RWPE1 (cell line): ENCODE measurements at regions of chr4 and their contacts with region 1.

Region 1: DNA sequence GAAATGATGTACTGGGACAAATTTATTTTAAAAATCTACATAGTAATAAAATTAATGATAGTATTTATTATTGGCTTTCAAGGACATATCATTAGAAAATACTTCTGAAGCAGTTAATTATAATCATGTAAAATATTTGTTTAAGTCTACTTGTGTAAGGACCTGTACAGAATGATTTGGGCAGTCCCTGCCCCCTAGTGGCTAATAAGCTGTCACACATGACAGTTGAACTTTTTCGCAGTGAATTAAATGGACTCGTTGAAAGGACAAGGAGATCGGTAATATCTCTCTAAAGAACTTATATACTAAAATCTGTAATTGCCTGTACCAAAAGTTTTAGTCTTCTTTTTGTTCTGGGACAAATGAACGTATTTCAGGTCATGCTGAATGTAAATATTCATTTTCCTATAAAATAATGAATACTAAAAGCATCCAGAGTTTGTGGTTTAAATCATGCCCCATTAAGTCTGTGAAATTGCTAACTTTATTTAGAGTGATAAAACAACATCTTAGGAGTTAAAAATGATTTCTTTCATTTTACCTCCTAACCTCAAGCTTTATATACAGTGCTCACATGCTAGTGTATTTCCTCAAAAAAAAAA is 13.6 kb downstream of the EXOC1 start:
- DNase-seq: peak; percentile 29
- H3K27ac ChIP-seq: no peak overlapping the region
- CTCF ChIP-seq: peak; percentile 83

Region 2: DNA sequence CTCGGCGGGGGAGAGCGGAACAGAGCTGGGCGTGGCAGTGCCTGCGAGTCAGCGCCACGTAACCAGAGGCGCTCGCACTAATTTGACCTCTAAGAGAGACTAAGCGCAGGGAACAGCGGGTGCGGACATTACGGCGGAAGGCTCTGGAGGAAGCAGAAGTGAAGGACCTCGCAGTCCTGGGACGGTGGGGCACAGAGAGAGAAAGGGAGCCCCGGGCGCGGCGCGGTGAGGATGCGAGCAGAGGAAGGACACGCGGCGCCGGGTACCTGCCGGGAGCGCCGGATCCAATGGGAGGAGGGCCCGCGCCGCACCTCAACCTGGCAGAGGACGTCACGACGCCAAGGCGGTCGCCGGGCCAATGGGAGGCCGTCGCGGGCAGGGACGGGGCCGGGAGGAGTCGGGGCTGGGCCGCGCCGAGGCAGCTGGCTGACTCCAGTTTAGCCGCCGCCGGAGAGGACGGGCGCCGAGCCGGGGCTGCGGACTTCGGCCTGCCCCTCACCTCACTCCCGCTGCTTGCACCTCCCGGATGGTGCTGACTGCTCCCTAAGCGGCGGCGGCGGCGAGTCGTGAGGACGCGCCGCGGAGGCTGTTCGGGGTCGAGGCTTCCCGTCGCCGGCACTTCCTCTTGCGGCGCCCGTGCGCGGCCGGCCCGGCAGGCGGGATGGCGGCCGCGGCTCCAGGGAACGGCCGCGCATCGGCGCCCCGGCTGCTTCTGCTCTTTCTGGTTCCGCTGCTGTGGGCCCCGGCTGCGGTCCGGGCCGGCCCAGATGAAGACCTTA is 471.4 kb before region 1 on chr4 and contains the start of gene TMEM165:
- CTCF ChIA-PET with region 1: no interaction called
- POLR2A ChIA-PET with region 1: no interaction called
- DNase-seq: peak; percentile 91
- H3K27ac ChIP-seq: peak within 1 kb of the TSS; percentile 92
- CTCF ChIP-seq: no peak

Region 3: DNA sequence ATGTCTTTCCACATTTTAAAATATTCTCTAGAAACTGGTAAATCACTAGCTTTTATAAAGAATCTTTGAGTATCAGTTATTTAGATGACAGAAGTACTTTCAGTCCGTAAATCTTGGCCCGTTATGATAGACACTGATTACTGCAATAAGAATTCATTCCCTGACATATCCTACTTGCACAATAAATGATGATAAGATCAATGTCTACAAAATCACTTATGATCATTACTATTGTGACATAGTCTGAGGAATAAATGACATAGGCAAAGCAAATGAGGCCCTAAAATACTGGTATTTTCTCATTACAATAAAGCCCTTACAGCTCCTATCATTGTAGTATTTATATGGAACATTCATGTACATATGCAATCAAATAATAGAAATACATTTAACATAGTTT is 268.4 kb before region 1 on chr4:
- CTCF ChIA-PET with region 1: no interaction called
- POLR2A ChIA-PET with region 1: interaction called, 17 read pairs
- DNase-seq: no peak
- H3K27ac ChIP-seq: no peak overlapping the region
- CTCF ChIP-seq: no peak

Region 4: DNA sequence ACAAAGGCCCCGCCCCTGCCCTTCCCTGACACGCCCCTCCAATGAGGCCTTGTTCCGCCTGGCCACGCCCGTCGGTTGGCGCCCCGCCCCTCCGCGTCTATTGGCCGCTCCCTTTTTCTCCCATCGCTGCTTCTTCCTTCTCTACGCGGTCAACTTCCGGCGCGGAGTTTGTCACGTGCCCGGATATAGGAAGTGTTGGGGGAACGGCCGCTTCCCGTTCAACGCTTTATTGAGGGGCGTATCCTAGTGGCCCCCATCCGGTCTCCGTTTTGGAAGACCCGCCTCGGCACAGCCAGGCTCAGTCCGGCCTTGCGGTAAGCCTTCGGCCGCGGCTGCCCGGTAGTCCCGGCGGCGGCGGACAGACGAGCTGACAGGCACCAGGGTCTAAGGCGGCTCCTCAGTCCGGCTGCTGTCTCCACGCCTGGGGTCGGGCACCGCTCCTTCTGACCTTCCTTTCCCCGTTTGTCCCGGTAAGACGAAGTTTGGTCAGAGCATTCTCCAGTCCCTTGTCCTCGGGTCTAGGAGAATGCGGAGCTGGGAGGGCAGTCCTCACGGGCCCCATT is 13.5 kb before region 1 on chr4 and contains the start of gene EXOC1:
- CTCF ChIA-PET with region 1: interaction called, 12 read pairs
- POLR2A ChIA-PET with region 1: no interaction called
- DNase-seq: peak; percentile 88
- H3K27ac ChIP-seq: peak within 1 kb of the TSS; percentile 76
- CTCF ChIP-seq: no peak